Naive thymus-derived CD4-positive, alpha-beta T cell (primary cell): ENCODE measurements at regions of chr17 and their contacts with region 1.

Region 1: DNA sequence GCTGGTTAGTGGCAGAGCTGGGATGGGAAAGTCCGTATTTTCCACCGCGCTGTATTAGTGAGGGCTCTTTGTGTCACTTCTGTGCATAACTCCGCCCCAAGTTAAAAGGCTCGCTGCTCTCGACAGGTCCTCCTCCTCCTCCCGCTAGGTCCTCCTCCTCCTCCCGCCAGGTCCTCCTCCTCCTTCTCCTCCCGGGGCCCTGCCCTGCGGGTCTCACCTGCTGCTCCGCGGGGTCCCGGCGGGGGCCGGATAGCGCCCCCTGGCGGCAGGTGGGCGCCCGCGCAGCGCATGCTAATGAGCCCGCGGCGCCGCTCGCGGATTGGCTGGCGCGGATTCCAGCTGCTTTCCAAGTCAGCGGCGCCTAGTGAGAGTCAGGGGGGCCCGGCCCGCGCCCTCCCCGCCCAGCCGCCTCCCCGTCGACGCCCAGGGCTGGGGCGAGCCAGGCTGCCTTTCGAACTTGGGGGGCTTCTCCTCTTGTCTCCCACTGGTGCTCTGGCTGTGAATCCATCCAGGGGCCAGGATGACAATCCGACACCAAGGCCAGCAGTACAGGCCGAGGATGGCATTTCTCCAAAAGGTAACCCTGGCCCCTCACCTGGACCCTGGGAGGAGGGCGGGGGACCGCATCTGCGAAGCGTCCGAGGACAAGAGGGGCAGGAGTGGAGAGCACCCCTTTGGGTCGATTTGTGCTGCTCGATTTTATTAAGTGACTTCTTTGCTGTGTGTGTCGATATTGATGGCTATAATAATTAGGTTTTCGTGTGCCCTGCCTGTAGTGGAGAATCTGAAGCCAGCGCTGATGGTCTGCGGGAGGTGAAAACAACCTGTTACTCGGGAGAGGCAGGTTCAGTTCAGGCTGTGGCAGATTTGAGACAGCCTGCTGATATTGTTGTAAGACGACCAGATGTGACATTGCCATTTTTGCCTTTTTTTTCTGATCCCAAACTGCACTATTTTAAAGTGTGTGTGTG is at the start of gene RGS9:
- DNase-seq: peak; percentile 77 to 90 (median 86)
- ATAC-seq: peak; percentile 99
- H3K4me3 ChIP-seq: peak within 1 kb of the TSS; percentile 69
- H3K4me3 Mint-ChIP-seq: peak within 1 kb of the TSS; percentile 67 to 91 (median 82)
- H3K27ac ChIP-seq: peak within 1 kb of the TSS; percentile 56
- H3K27ac Mint-ChIP-seq: peak within 1 kb of the TSS; percentile 45 to 87 (median 75)
- H3K4me1 ChIP-seq: peaks cover 12 to 27% of the 10 kb centered on the region in 2 donors
- H3K4me1 Mint-ChIP-seq: peaks cover 10 to 40% (median 22%) of the 10 kb centered on the region in 7 donors
- H3K27me3 ChIP-seq: no peaks in the 10 kb centered on the region
- H3K27me3 Mint-ChIP-seq: peaks cover 8 to 31% (median 18%) of the 10 kb centered on the region in 5 donors
- total RNA-seq, gene RGS9: 0.32 to 3.9 (median 0.81) TPM

Region 2: GRCh38 chr17:65122836-65123756 is 14.2 kb before region 1 on chr17:
- CTCF ChIA-PET with region 1: interaction called, 6 read pairs
- POLR2A ChIA-PET with region 1: interaction called, 7 read pairs
- intact Hi-C with region 1: loop called (anchors 1 kb)
- DNase-seq: peak; percentile 60 to 91 (median 84)
- ATAC-seq: peak; percentile 98
- H3K4me3 ChIP-seq: peak overlapping the region; percentile 43
- H3K4me3 Mint-ChIP-seq: peak overlapping the region; percentile 74 to 95 (median 92)
- H3K27ac ChIP-seq: peak overlapping the region; percentile 74
- H3K27ac Mint-ChIP-seq: peak overlapping the region; percentile 88 to 99 (median 98)
- H3K4me1 ChIP-seq: peaks cover 0 to 3% of the 10 kb centered on the region in 2 donors
- H3K4me1 Mint-ChIP-seq: peaks cover 9 to 32% (median 10%) of the 10 kb centered on the region in 7 donors
- H3K27me3 ChIP-seq: no peaks in the 10 kb centered on the region
- H3K27me3 Mint-ChIP-seq: peaks cover 0 to 12% (median 4%) of the 10 kb centered on the region in 5 donors

Region 3: DNA sequence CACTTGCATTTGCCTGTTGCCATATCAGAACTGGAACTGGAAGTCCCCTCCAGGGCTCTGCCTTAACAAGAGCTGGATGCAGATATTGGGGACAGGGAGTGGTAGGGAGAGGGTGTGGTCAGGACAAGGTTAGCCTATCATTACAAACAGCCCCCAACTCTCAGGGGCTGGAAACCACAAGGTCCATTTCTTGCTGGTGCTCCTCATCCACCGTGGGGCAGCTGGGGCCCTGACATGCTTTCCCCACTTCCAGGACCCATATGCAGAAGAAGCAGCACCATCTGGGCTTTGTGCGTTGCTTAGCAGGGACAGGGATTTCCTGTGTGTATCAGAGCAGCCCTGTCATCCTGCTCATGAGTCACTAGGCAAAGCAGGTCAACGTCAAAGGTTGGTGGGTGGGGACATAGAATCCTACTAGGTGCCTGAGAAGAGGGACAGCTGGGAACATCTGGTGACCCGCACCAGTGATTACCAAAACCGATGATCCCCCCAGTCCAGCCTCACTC is 26.7 kb after region 1 on chr17:
- CTCF ChIA-PET with region 1: no interaction called
- POLR2A ChIA-PET with region 1: no interaction called
- intact Hi-C with region 1: no loop called
- DNase-seq: peak in 1 of 9 donors; percentile 53
- ATAC-seq: peak; percentile 75
- H3K4me3 ChIP-seq: no peak overlapping the region
- H3K4me3 Mint-ChIP-seq: no peak overlapping the region
- H3K27ac ChIP-seq: no peak overlapping the region
- H3K27ac Mint-ChIP-seq: peak overlapping the region in 1 of 9 donors; percentile 64
- H3K4me1 ChIP-seq: no peaks in the 10 kb centered on the region
- H3K4me1 Mint-ChIP-seq: peaks cover 0 to 18% (median 3%) of the 10 kb centered on the region in 7 donors
- H3K27me3 ChIP-seq: no peaks in the 10 kb centered on the region
- H3K27me3 Mint-ChIP-seq: no peaks in the 10 kb centered on the region

Region 4: GRCh38 chr17:65181237-65182061 is 44.1 kb after region 1 on chr17:
- CTCF ChIA-PET with region 1: interaction called, 4 read pairs
- POLR2A ChIA-PET with region 1: no interaction called
- intact Hi-C with region 1: loop called in 1 of 2 experiments (anchors 1 kb)
- DNase-seq: peak in 1 of 9 donors; percentile 58
- ATAC-seq: peak; percentile 10
- H3K4me3 ChIP-seq: no peak overlapping the region
- H3K4me3 Mint-ChIP-seq: peak overlapping the region in 1 of 10 donors; percentile 64
- H3K27ac ChIP-seq: no peak overlapping the region
- H3K27ac Mint-ChIP-seq: peak overlapping the region in 1 of 9 donors; percentile 89
- H3K4me1 ChIP-seq: peaks cover 0 to 43% of the 10 kb centered on the region in 2 donors
- H3K4me1 Mint-ChIP-seq: peaks cover 0 to 78% (median 15%) of the 10 kb centered on the region in 7 donors
- H3K27me3 ChIP-seq: no peaks in the 10 kb centered on the region
- H3K27me3 Mint-ChIP-seq: peaks cover 0 to 10% (median 0%) of the 10 kb centered on the region in 5 donors

Region 5: GRCh38 chr17:65198653-65199382 is 61.5 kb after region 1 on chr17:
- CTCF ChIA-PET with region 1: no interaction called
- POLR2A ChIA-PET with region 1: no interaction called
- intact Hi-C with region 1: loop called (anchors 1 kb)
- DNase-seq: peak in 7 of 9 donors; percentile 36 to 67 (median 57)
- ATAC-seq: peak; percentile 79
- H3K4me3 ChIP-seq: no peak overlapping the region
- H3K4me3 Mint-ChIP-seq: no peak overlapping the region
- H3K27ac ChIP-seq: no peak overlapping the region
- H3K27ac Mint-ChIP-seq: no peak overlapping the region
- H3K4me1 ChIP-seq: no peaks in the 10 kb centered on the region
- H3K4me1 Mint-ChIP-seq: peaks cover 0 to 6% (median 0%) of the 10 kb centered on the region in 7 donors
- H3K27me3 ChIP-seq: no peaks in the 10 kb centered on the region
- H3K27me3 Mint-ChIP-seq: peaks cover 0 to 6% (median 0%) of the 10 kb centered on the region in 5 donors